Panc1 (cell line): ENCODE measurements at regions of chr15 and their contacts with region 1.

Region 1: DNA sequence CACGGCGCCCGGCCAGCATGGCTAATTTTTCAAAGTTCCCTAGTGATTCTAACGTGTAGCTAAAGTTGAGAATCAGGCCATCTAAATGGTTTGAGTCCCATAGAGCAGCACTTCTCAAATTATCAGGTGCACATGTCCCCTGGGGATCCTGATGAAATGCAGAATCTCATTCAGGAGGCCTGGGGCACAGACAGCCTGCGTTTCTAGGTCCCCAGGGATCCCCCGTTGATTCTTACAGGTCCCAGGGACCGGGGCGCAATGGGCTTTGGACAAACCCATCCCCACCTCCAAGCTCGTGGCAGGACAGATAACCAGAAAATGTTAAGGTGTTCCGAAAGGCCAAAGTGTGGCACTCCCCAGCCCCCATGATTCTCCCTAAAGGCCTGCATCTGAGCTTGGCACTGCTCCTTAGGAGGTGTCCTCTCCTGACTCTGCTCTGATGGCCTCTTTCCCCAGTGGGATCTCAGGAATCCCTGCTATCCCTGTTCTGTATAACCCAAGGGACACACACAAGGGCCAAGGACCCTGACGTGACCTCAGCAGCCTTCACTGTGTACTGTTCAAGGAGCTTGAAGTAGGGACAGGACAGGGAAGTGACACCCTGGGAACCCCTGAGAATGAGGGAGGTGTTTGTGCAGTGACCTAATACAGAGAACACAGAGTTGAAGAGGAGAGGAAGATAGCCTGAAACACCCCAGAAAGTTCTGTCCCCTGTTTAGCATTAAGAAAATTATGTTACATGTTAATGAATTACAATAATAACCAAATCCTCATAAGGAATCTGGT is 8.0 kb downstream of the LRRK1 start:
- DNase-seq: no peak
- ATAC-seq: no peak
- H3K4me3 ChIP-seq: no peak overlapping the region
- H3K27ac ChIP-seq: peak overlapping the region; percentile 87
- H3K4me1 ChIP-seq: peaks cover 51% of the 10 kb centered on the region
- H3K27me3 ChIP-seq: no peaks in the 10 kb centered on the region
- CTCF ChIP-seq: no peak

Region 2: GRCh38 chr15:100940767-100941379 is 13.7 kb after region 1 on chr15:
- CTCF ChIA-PET with region 1: no interaction called
- POLR2A ChIA-PET with region 1: no interaction called
- in situ Hi-C with region 1: no loop called
- intact Hi-C with region 1: no loop called
- DNase-seq: no peak
- ATAC-seq: 0 out of 2 replicates have a peak, but pooled peaks have one; percentile 18
- H3K4me3 ChIP-seq: no peak overlapping the region
- H3K27ac ChIP-seq: peak overlapping the region; percentile 86
- H3K4me1 ChIP-seq: peaks cover 47% of the 10 kb centered on the region
- H3K27me3 ChIP-seq: no peaks in the 10 kb centered on the region
- CTCF ChIP-seq: no peak

Region 3: GRCh38 chr15:101047301-101047781 is 120.2 kb after region 1 on chr15:
- CTCF ChIA-PET with region 1: no interaction called
- POLR2A ChIA-PET with region 1: no interaction called
- in situ Hi-C with region 1: no loop called
- intact Hi-C with region 1: no loop called
- DNase-seq: no peak
- ATAC-seq: no peak
- H3K4me3 ChIP-seq: no peak overlapping the region
- H3K27ac ChIP-seq: no peak overlapping the region
- H3K4me1 ChIP-seq: no peaks in the 10 kb centered on the region
- H3K27me3 ChIP-seq: no peaks in the 10 kb centered on the region
- CTCF ChIP-seq: no peak

Region 4: GRCh38 chr15:101288908-101289513 is 361.8 kb after region 1 on chr15:
- CTCF ChIA-PET with region 1: interaction called, 10 read pairs
- POLR2A ChIA-PET with region 1: no interaction called
- in situ Hi-C with region 1: no loop called
- intact Hi-C with region 1: no loop called
- DNase-seq: no peak
- ATAC-seq: peak; percentile 61; the same call in 1 of the 2 replicates
- H3K4me3 ChIP-seq: no peak overlapping the region
- H3K27ac ChIP-seq: no peak overlapping the region
- H3K4me1 ChIP-seq: peaks cover 18% of the 10 kb centered on the region
- H3K27me3 ChIP-seq: no peaks in the 10 kb centered on the region
- CTCF ChIP-seq: peak; percentile 84